PC-9 (cell line): ENCODE measurements at regions of chr9 and their contacts with region 1.

Region 1: DNA sequence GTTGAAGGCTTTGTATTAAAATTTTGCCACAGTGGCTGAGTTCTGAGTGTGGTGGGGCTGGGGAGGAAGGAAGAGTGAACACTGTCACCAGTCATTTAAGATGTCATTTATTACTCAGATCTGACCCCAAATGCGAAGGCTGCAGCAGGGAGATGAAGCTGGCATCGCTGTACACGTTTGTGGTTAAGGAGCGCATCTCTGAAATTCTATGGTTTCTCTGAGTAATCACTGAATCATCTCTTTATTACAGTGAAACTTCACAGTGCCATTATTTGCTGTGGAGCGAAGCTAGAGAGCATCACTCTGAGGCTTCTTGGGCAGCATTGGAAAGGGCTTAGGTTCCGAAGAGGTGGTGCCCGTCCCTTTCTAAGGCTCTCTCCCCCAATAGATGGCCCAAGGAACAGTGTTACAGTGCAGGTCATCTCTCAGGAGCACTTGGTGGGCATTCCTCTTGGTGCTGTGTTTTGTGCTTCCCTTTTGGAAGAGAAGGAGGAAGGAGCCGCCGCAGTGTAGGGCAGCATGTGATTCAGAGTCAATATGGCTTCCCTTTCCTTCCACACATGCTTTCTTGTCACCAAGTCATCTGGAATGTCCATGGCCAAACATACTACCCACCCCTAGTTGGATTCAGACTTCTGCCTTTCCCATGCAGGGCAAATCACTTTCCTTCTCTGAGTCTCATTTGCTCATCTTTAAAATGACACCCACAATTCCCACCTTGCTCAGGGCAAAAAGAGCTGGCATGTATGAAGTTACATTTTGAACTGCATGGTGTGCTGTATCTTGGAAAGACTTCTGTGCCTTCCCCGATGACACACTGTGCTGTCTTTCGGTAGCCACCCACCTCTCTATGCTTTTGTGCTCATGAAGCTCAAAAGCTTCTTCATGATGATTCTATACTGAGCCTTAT is 9.3 kb upstream of the TEX48 start:
- DNase-seq: peak; percentile 69 to 95
- H3K4me3 ChIP-seq: no peak overlapping the region
- H3K27ac ChIP-seq: peak overlapping the region; percentile 79
- H3K4me1 ChIP-seq: peaks cover 35% of the 10 kb centered on the region
- H3K27me3 ChIP-seq: no peaks in the 10 kb centered on the region
- CTCF ChIP-seq: no peak

Region 2: DNA sequence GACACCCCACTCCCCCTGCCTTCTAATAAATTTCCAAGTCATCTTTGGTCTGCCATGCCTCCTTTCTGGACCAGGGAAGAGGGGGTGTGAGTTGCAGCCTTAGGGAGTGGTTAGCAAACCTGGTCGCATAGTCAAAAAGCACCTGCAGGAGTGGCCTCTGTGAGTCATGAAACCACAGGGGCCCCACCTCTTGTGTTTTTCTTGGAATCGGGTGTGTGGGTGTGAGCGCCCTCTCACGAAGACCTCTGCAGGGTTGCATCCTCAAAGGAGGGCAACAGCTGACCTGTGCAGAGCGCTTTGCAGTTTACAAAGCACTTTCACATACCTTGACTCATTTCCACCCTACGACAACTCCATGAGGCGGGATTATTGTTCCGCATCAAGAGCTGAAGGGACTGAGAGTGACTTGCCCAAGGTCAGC is 27.5 kb after region 1 on chr9:
- CTCF ChIA-PET with region 1: no interaction called
- POLR2A ChIA-PET with region 1: no interaction called
- intact Hi-C with region 1: loop called (anchors 1 kb)
- DNase-seq: peak; percentile 94 to 98
- H3K4me3 ChIP-seq: no peak overlapping the region
- H3K27ac ChIP-seq: peak overlapping the region; percentile 50
- H3K4me1 ChIP-seq: peaks cover 25% of the 10 kb centered on the region
- H3K27me3 ChIP-seq: no peaks in the 10 kb centered on the region
- CTCF ChIP-seq: no peak; the same call in 1 of the 2 replicates

Region 3: GRCh38 chr9:114769624-114770023 is 78.3 kb after region 1 on chr9:
- CTCF ChIA-PET with region 1: no interaction called
- POLR2A ChIA-PET with region 1: no interaction called
- intact Hi-C with region 1: no loop called
- DNase-seq: no peak
- H3K4me3 ChIP-seq: no peak overlapping the region
- H3K27ac ChIP-seq: no peak overlapping the region
- H3K4me1 ChIP-seq: no peaks in the 10 kb centered on the region
- H3K27me3 ChIP-seq: 0 out of 2 replicates have a peak, but pooled peaks cover 5% of the 10 kb centered on the region
- CTCF ChIP-seq: no peak